Right ventricle myocardium superior (tissue), 1 donor: ENCODE measurements at regions of chr5 and their contacts with region 1.

Region 1: DNA sequence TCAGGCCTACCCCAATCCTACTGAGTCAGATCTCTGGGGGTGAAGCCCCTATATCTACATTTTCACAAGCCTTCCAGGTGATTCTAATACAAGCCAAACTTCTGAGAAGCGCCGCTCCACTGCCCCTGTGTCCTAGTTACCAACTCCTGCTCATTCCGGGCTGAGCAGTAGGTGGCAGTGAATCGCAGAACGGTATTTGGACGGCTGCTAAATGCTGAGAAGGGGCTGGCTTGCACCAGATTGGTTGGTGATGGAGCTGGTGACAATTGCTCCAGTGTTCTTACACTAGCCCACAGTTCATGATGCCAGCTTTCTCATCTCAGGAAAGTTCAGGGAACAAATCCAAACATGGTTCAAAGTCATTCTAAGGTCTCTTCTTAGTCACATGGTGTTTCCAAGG is 31.1 kb upstream of the FGF1 start:
- DNase-seq: peak; percentile 62
- ATAC-seq: peak; percentile 69

Region 2: DNA sequence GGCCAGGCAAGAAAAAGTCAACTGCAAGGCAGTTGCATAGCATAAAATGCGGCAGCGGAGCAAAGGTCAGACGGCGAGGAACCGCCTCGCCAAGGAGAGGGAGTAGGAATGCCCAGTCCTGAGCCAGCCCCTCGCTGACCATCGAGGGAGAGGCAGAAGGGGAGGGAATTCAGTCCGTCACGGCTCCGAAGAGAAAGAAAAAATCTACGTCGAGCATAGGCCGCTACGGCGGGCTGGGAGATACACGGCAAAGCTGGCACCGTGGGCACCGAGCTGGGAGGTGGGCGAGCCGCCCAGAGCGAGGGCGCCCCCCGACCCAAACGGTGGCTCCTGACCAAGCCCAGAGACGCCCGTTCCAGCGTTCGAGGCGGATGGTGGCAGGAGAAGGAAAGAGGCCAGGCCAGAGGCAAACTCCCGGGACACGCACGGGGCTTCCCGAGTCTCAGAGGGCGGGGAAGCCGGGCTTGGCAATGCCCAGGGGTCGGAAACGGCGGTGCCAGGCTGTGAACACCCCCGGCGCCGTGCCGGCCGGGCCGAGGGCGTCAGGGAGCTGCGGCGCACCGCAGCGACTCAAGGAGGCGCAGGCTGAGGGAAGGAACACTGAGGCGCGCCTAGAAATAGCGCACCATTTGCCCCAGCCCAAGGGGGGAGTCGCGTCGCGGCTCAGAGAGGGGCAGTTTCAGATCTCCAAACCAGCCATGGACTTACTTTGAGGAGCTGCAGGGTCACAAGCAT is 392.7 kb before region 1 on chr5:
- intact Hi-C with region 1: no loop called
- DNase-seq: peak; percentile 57
- ATAC-seq: peak; percentile 34

Region 3: DNA sequence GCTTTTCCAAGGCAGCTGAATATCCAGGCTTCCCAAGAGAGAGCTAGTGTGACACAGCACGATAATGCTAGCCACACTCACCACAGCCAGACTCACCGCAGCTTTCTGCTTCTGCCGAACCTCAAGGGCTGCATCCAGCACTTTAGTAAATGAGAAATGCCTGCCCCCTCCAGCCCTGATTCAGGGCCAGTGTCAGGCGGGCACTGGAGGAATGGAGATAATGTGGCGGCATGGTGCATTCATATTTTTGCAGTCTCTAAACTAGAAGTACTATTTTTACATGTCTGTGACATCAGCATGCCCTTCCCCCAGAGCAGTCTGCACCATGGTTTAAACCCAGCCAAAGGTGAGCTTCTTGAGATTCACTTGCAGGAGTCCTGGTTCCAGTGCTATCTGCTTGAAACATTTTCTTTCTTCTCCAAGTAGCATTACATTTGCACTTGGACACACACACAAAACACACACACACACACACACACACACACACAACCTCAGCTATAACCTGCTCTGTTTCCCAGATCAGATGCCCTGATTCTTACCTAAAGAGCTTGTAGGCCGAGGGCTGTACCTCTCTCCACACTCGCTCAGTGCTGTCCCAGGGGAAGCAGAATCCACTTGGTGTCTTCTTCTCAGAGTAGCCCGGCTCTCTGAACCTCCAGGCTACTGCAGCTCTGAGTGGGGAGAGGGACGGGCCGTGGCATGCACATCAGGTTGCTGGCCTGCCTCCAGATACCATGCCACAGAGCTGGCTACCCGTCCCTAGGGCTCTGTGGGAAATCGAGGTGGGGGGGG is 31.3 kb before region 1 on chr5 and contains the start of gene FGF1:
- intact Hi-C with region 1: no loop called
- DNase-seq: peak; percentile 77
- ATAC-seq: peak; percentile 87
- total RNA-seq, gene FGF1: 42.7 TPM

Region 4: DNA sequence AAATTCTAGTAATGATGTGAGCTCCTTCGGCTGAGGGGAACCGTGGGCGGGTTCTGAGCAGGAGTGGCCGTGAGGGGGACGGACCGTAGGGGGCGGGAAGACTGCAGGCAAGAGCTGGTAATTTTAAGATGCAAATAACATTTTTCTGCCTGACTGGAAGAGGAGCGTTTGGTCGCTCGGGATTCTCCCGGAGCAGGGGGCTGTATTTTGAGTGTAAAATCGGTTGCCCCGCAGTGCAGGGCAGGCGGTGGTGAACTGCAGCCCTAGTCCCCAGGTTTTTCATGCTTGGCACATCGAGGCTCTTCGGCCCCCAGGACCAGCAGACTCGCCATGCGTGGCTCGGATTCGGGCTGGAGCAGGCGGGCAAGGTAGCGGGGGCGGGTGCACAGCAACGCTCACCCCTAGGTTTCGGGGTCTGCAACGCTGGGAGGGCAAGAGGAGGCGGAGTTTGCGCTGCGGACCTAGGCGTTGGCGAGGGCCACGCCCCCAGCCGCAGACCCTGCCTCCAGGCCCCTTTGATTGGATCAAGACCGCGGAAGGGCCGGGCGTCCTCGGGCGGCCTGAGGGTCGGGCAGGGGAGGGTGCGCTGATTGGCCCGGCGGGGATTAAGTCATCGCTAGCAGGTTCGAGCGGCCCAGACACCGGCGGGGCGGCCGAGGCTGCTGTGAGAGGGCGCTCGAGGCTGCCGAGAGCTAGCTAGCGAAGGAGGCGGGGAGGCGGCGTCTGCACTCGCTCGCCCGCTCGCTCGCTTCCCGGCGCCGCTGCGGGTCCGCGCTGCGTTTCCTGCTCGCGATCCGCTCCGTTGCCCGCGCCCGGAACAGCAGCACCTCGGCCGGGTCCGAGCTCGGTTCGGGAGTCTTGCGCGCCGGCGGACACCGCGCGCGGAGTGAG is 53.0 kb after region 1 on chr5 and contains the start of gene ARHGAP26:
- intact Hi-C with region 1: loop called (anchors 5 kb)
- DNase-seq: peak; percentile 99
- ATAC-seq: peak; percentile 96
- total RNA-seq, gene ARHGAP26: 32.5 TPM

Region 5: GRCh38 chr5:142881076-142881783 is 164.3 kb after region 1 on chr5:
- intact Hi-C with region 1: loop called (anchors 2 kb)
- DNase-seq: no peak
- ATAC-seq: peak; percentile 1